HepG2 (cell line): ENCODE measurements at regions of chr14 and their contacts with region 1.

Region 1: GRCh38 chr14:21711360-21711961 is 37.8 kb upstream of the OR4E1 start:
- DNase-seq: peak; percentile 66
- ATAC-seq: peak; percentile 91
- H3K4me3 ChIP-seq: no peak overlapping the region
- H3K27ac ChIP-seq: no peak overlapping the region
- H3K4me1 ChIP-seq: no peaks in the 10 kb centered on the region
- H3K27me3 ChIP-seq: no peaks in the 10 kb centered on the region; a peak in 1 of 5 replicates
- CTCF ChIP-seq: peak; percentile 73
- EP300 ChIP-seq: no peak
- POLR2A ChIP-seq: no peak
- RAD21 ChIP-seq: no peak

Region 2: GRCh38 chr14:21612324-21612723 is 99.1 kb before region 1 on chr14:
- CTCF ChIA-PET with region 1: no interaction called
- POLR2A ChIA-PET with region 1: no interaction called
- in situ Hi-C with region 1: loop called (anchors 25 kb)
- intact Hi-C with region 1: no loop called
- DNase-seq: no peak
- ATAC-seq: peak; percentile 54
- H3K4me3 ChIP-seq: no peak overlapping the region
- H3K27ac ChIP-seq: no peak overlapping the region
- H3K4me1 ChIP-seq: no peaks in the 10 kb centered on the region
- H3K27me3 ChIP-seq: 0 out of 5 replicates have a peak, but pooled peaks cover 0 to 12% of the 10 kb centered on the region in 2 experiments
- CTCF ChIP-seq: 0 out of 2 replicates have a peak, but pooled peaks have one; percentile 18
- EP300 ChIP-seq: no peak
- POLR2A ChIP-seq: no peak
- RAD21 ChIP-seq: no peak

Region 3: DNA sequence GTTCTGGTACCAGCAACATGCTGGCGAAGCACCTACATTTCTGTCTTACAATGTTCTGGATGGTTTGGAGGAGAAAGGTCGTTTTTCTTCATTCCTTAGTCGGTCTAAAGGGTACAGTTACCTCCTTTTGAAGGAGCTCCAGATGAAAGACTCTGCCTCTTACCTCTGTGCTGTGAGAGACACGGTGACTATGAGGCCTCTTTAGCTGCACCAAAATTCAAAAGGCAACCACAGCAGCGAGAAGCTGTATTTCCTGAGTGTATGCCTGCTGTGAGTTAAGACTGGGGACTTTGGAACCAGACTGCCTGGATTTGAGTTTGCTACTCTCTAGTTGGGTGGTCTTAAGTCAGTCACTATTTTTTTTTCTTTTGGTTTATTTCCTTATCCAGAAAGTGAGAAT is 68.1 kb before region 1 on chr14:
- CTCF ChIA-PET with region 1: no interaction called
- POLR2A ChIA-PET with region 1: no interaction called
- in situ Hi-C with region 1: no loop called
- intact Hi-C with region 1: loop called (anchors 2 kb)
- DNase-seq: no peak
- ATAC-seq: no peak; the same call in 2 of the 3 replicates
- H3K4me3 ChIP-seq: no peak overlapping the region
- H3K27ac ChIP-seq: no peak overlapping the region
- H3K4me1 ChIP-seq: no peaks in the 10 kb centered on the region
- H3K27me3 ChIP-seq: peaks cover 0 to 8% of the 10 kb centered on the region in 2 experiments; a peak in 2 of 5 replicates
- CTCF ChIP-seq: no peak
- EP300 ChIP-seq: no peak
- POLR2A ChIP-seq: no peak
- RAD21 ChIP-seq: no peak

Region 4: GRCh38 chr14:22252686-22253085 is 541.2 kb after region 1 on chr14:
- CTCF ChIA-PET with region 1: no interaction called
- POLR2A ChIA-PET with region 1: no interaction called
- in situ Hi-C with region 1: no loop called
- intact Hi-C with region 1: no loop called
- DNase-seq: no peak
- ATAC-seq: no peak
- H3K4me3 ChIP-seq: no peak overlapping the region
- H3K27ac ChIP-seq: no peak overlapping the region
- H3K4me1 ChIP-seq: no peaks in the 10 kb centered on the region
- H3K27me3 ChIP-seq: peaks cover 0 to 6% of the 10 kb centered on the region in 2 experiments; a peak in 1 of 5 replicates
- CTCF ChIP-seq: no peak
- EP300 ChIP-seq: no peak
- POLR2A ChIP-seq: no peak
- RAD21 ChIP-seq: no peak